Breast epithelium (tissue), 4 donors: ENCODE measurements at regions of chr9 and their contacts with region 1.

Region 1: GRCh38 chr9:34546834-34547827 is 24.3 kb upstream of the ENHO start:
- DNase-seq: no peak
- H3K4me3 ChIP-seq: no peak overlapping the region
- H3K27ac ChIP-seq: no peak overlapping the region
- H3K4me1 ChIP-seq: no peaks in the 10 kb centered on the region
- H3K27me3 ChIP-seq: no peaks in the 10 kb centered on the region
- CTCF ChIP-seq: peak; percentile 71 to 73 (median 72)
- POLR2A ChIP-seq: no peak

Region 2: DNA sequence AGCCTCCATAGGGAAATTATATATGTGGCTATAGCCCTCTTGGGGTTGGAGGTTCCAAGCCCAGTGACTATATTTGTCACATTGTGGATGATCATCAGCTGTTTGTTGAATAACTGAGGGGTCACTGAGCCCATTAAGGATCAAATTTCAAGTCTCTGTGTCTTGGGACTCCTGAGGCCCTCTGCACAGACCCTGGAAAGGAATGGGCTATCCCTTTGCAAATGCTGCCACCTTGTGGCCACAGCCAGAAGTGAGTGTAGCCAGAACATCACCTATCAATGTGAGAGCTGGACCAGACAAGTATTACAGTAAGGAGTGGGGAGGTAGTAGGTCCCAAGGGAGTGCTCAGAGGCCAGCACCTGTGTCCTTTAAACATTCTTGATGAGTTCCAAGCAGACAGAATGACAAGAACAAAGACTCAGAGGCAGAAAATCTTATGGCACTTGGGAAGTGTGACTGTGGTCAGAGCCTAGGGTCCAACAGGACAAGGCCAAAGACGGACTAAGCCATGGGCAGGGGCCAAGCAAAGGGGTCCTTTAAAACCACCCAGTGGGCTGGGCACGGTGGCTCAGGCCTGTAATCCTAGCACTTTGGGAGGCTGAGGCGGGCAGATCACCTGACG is 56.6 kb after region 1 on chr9:
- intact Hi-C with region 1: loop called (anchors 10 kb)
- DNase-seq: peak; percentile 77 to 83
- H3K4me3 ChIP-seq: no peak overlapping the region
- H3K27ac ChIP-seq: no peak overlapping the region
- H3K4me1 ChIP-seq: no peaks in the 10 kb centered on the region
- H3K27me3 ChIP-seq: no peaks in the 10 kb centered on the region
- CTCF ChIP-seq: peak; percentile 85 to 92 (median 91)
- POLR2A ChIP-seq: no peak